A549 (cell line): ENCODE measurements at regions of chr4 and their contacts with region 1.

Region 1: DNA sequence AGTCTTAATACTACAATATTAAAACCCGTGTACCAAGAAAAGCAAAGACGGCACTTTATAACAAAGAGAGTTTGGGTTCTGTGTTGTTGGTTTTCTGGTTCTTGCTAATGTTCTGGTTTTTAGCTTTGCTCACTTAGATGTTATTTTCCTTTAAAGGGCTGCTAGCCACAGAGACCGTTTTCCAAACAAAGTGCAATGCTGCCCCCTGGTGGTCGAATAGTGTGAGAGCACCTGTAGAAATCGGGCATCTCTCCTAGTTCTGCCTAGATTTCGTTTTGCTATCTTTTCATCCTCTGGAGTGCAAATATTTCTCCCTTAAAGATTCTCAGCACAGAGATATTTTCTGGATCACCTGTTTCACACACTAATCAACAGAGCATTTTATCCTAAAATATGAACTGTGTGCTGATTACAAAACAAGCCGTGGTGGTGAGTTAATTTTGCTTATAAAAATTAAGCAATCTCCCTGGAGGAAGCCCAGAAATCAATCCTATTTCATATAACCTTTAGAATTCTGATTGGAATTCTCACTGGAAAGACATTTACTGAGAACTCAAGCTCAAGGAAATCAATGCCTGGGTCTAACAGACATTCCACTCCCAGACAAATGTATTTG is 334.5 kb upstream of the NOCT start:
- DNase-seq: peak; percentile 11 to 58
- ATAC-seq: peak; percentile 70 to 90; a peak in 4 of 6 replicates
- H3K4me3 ChIP-seq: no peak overlapping the region
- H3K27ac ChIP-seq: no peak overlapping the region
- H3K4me1 ChIP-seq: peaks cover 10% of the 10 kb centered on the region; the same call in 2 of the 3 replicates
- CTCF ChIP-seq: peak; percentile 82
- EP300 ChIP-seq: no peak
- POLR2A ChIP-seq: no peak
- RAD21 ChIP-seq: peak; percentile 86 to 91

Region 2: GRCh38 chr4:137735561-137736104 is 945.5 kb before region 1 on chr4:
- CTCF ChIA-PET with region 1: interaction called, 11 read pairs
- POLR2A ChIA-PET with region 1: no interaction called
- DNase-seq: no peak
- ATAC-seq: peak in 1 of 2 experiments; percentile 39; a peak in 1 of 6 replicates
- H3K4me3 ChIP-seq: no peak overlapping the region
- H3K27ac ChIP-seq: no peak overlapping the region
- H3K4me1 ChIP-seq: no peaks in the 10 kb centered on the region
- CTCF ChIP-seq: no peak
- EP300 ChIP-seq: no peak
- POLR2A ChIP-seq: no peak
- RAD21 ChIP-seq: no peak

Region 3: DNA sequence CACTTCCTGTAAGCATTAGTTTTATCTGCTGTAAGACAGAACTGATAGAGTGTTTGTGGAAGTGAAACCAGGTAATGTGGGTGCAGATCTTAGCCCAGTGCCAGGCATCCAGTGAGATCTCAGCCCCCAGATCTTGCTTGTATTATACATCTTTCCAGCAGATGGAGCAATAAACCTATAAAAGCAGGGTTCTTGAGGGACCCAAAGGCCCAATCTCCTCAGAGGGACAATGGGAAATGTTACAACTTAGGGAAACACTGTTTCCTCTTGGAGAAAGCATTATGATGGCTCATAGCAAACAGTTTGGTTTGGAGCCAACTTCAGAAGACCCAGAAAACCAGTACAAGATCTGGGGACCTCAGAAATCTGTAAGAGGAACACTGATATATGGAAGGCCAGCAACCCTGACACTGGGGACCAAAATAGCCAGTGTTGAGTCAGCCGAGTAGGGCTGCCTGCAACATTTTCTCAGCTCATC is 645.3 kb before region 1 on chr4:
- CTCF ChIA-PET with region 1: interaction called, 27 read pairs
- POLR2A ChIA-PET with region 1: no interaction called
- DNase-seq: peak; percentile 38 to 56
- ATAC-seq: peak; percentile 99
- H3K4me3 ChIP-seq: no peak overlapping the region
- H3K27ac ChIP-seq: peak overlapping the region in 1 of 2 experiments; percentile 61; a peak in 3 of 6 replicates
- H3K4me1 ChIP-seq: peaks cover 13% of the 10 kb centered on the region
- CTCF ChIP-seq: peak; percentile 73
- EP300 ChIP-seq: no peak
- POLR2A ChIP-seq: no peak
- RAD21 ChIP-seq: peak; percentile 87 to 89

Region 4: GRCh38 chr4:138663883-138664282 is 17.2 kb before region 1 on chr4:
- CTCF ChIA-PET with region 1: interaction called, 13 read pairs
- POLR2A ChIA-PET with region 1: no interaction called
- DNase-seq: no peak
- ATAC-seq: no peak
- H3K4me3 ChIP-seq: no peak overlapping the region
- H3K27ac ChIP-seq: no peak overlapping the region
- H3K4me1 ChIP-seq: no peaks in the 10 kb centered on the region
- CTCF ChIP-seq: no peak
- EP300 ChIP-seq: no peak
- POLR2A ChIP-seq: no peak
- RAD21 ChIP-seq: no peak

Region 5: GRCh38 chr4:138870737-138871554 is 189.8 kb after region 1 on chr4:
- CTCF ChIA-PET with region 1: interaction called, 12 read pairs
- POLR2A ChIA-PET with region 1: no interaction called
- DNase-seq: peak; percentile 33 to 67
- ATAC-seq: peak; percentile 67 to 81
- H3K4me3 ChIP-seq: no peak overlapping the region
- H3K27ac ChIP-seq: no peak overlapping the region
- H3K4me1 ChIP-seq: peaks cover 6% of the 10 kb centered on the region
- CTCF ChIP-seq: peak; percentile 69
- EP300 ChIP-seq: no peak
- POLR2A ChIP-seq: no peak
- RAD21 ChIP-seq: peak; percentile 84 to 86